Activated CD4-positive, alpha-beta memory T cell treated with anti-CD3 and anti-CD28 coated beads for 36 hours (primary cell): ENCODE measurements at regions of chr11 and their contacts with region 1.

Region 1: GRCh38 chr11:46700241-46701077 is at the starts of genes ARHGAP1 and ZNF408:
- DNase-seq: peak; percentile 100
- H3K4me3 Mint-ChIP-seq: peak within 1 kb of the TSS; percentile 92
- H3K27ac Mint-ChIP-seq: peak within 1 kb of the TSS; percentile 95
- H3K4me1 Mint-ChIP-seq: peaks cover 50% of the 10 kb centered on the region
- H3K27me3 Mint-ChIP-seq: no peaks in the 10 kb centered on the region
- total RNA-seq, gene ARHGAP1: 45.8 to 46.2 TPM
- total RNA-seq, gene ZNF408: 9.4 to 10.7 TPM

Region 2: GRCh38 chr11:45917623-45918330 is 782.7 kb before region 1 on chr11 and contains the start of gene PEX16:
- CTCF ChIA-PET with region 1: no interaction called
- POLR2A ChIA-PET with region 1: no interaction called
- intact Hi-C with region 1: loop called (anchors 1 kb)
- DNase-seq: peak; percentile 98
- H3K4me3 Mint-ChIP-seq: peak within 1 kb of the TSS; percentile 96
- H3K27ac Mint-ChIP-seq: peak within 1 kb of the TSS; percentile 96
- H3K4me1 Mint-ChIP-seq: peaks cover 26% of the 10 kb centered on the region
- H3K27me3 Mint-ChIP-seq: peaks cover 3% of the 10 kb centered on the region
- total RNA-seq, gene PEX16: 28.2 to 34.6 TPM

Region 3: DNA sequence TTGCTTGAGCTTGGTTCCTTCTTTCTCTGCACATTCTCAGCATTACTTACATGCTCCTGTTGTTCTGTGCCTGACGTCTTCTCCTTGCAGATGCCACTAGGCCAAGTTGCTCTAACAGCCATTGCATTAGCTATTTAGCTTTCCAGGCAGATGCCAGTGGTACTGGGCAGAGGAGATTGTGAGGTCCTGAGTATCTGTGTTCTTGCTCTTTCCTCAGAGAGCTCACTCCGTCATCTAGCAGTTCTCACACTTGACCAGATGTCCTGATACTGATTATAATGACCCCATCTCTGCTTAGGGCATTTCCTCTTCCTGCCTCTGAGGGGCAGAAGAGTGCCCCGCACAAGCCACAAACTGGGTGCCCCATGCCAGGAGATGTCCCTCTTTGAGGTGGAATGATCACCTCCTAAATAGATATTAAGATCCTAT is 30.7 kb before region 1 on chr11:
- CTCF ChIA-PET with region 1: interaction called, 8 read pairs
- POLR2A ChIA-PET with region 1: interaction called, 6 read pairs
- intact Hi-C with region 1: loop called (anchors 2 kb)
- DNase-seq: peak; percentile 23
- H3K4me3 Mint-ChIP-seq: no peak overlapping the region
- H3K27ac Mint-ChIP-seq: peak overlapping the region; percentile 66
- H3K4me1 Mint-ChIP-seq: peaks cover 54% of the 10 kb centered on the region
- H3K27me3 Mint-ChIP-seq: no peaks in the 10 kb centered on the region

Region 4: GRCh38 chr11:46845740-46846509 is 145.5 kb after region 1 on chr11 and contains the start of gene CKAP5:
- CTCF ChIA-PET with region 1: no interaction called
- POLR2A ChIA-PET with region 1: no interaction called
- intact Hi-C with region 1: loop called (anchors 1 kb)
- DNase-seq: peak; percentile 92
- H3K4me3 Mint-ChIP-seq: peak within 1 kb of the TSS; percentile 93
- H3K27ac Mint-ChIP-seq: peak within 1 kb of the TSS; percentile 91
- H3K4me1 Mint-ChIP-seq: peaks cover 26% of the 10 kb centered on the region
- H3K27me3 Mint-ChIP-seq: no peaks in the 10 kb centered on the region
- total RNA-seq, gene CKAP5: 174 TPM